Activated CD4-positive, alpha-beta memory T cell treated with anti-CD3 and anti-CD28 coated beads for 36 hours (primary cell): ENCODE measurements at regions of chr6 and their contacts with region 1.

Region 1: GRCh38 chr6:170295510-170296422 is 4.9 kb upstream of the DLL1 start:
- DNase-seq: peak; percentile 66
- H3K4me3 Mint-ChIP-seq: peak overlapping the region; percentile 62
- H3K27ac Mint-ChIP-seq: no peak overlapping the region
- H3K4me1 Mint-ChIP-seq: peaks cover 32% of the 10 kb centered on the region
- H3K27me3 Mint-ChIP-seq: peaks cover 55% of the 10 kb centered on the region

Region 2: DNA sequence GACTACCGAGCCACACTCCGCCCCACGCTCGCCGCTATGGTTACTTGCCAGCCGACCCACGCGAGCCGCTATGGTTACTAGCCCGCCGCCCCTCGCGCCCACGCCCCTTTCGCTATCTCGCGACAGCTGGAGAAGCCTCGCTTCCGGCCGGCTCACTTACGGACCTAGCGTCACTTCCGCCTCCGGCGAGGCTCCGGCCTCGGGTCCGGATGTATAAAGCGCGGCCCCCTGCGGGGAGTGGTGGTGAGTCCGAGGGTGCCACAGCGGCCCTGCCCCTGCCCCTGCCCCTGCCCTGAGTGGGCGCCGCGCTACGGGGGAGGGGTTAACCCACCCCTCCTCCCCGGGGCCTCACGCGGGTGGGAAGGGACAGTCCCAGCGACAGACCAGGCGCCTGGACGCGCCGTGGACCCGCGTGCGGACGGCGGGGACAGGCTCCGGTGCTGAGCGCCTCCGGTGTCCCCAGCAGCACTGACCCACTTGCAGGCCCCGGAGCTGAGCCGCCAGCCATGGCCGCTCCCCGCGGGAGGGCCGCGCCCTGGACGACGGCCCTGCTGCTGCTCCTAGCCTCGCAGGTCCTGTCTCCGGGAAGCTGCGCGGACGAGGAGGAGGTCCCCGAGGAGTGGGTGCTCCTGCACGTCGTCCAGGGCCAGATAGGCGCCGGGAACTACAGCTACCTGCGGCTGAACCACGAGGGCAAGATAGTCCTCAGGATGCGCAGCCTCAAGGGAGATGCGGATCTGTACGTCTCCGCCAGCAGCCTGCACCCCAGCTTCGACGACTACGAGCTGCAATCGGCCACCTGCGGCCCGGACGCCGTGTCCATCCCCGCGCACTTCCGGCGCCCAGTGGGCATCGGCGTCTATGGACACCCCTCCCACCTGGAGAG is 593.6 kb before region 1 on chr6 and contains the starts of genes C6orf120 and WDR27:
- CTCF ChIA-PET with region 1: no interaction called
- POLR2A ChIA-PET with region 1: no interaction called
- intact Hi-C with region 1: loop called (anchors 5 kb)
- DNase-seq: peak; percentile 99
- H3K4me3 Mint-ChIP-seq: peak within 1 kb of the TSS; percentile 89
- H3K27ac Mint-ChIP-seq: peak within 1 kb of the TSS; percentile 88
- H3K4me1 Mint-ChIP-seq: peaks cover 43% of the 10 kb centered on the region
- H3K27me3 Mint-ChIP-seq: no peaks in the 10 kb centered on the region
- total RNA-seq, gene C6orf120: 15.1 to 15.4 TPM
- total RNA-seq, gene WDR27: 39.7 to 41.6 TPM

Region 3: DNA sequence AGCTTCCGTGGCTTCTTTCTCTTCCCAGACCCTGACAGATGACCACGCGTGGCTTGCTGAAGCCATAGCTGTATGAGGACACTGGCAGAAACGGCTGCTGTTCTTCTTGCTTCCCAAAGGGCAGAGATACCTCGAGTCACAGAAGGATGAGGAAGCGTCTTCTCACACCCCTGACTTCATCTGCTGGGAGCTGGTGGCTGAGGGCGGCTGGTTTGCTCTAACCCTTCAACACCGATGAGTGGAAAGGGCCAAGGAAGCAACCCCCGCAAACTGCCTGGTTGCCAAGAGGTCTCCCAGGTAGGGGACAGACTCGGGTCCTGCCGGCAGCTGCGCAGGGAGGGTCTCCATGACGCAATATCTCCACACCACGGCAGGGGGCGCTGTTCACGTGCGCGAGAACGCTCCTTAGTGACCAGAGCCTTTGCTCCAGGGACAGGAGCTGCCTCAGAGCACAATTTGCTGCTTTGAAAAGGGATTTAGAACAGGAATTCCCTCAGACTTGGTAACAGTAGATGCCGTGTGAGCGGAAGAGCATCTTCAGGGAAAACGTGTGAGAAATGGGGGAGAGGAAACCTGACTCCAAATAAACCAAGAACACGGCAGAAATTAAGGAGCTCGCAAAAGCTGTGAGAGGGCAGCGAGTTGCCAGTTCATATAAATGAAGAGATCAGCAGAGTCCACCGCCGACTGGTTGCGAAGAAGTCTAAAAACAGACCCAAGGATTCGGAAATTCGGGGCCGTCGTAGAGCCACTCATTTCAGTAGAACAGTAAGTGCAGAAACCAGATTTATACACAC is 464.1 kb before region 1 on chr6:
- CTCF ChIA-PET with region 1: interaction called, 6 read pairs
- POLR2A ChIA-PET with region 1: no interaction called
- intact Hi-C with region 1: loop called (anchors 10 kb)
- DNase-seq: peak; percentile 80
- H3K4me3 Mint-ChIP-seq: no peak overlapping the region
- H3K27ac Mint-ChIP-seq: no peak overlapping the region
- H3K4me1 Mint-ChIP-seq: peaks cover 4% of the 10 kb centered on the region
- H3K27me3 Mint-ChIP-seq: peaks cover 40% of the 10 kb centered on the region

Region 4: GRCh38 chr6:169990095-169991030 is 305.4 kb before region 1 on chr6:
- CTCF ChIA-PET with region 1: no interaction called
- POLR2A ChIA-PET with region 1: no interaction called
- intact Hi-C with region 1: loop called (anchors 5 kb)
- DNase-seq: peak; percentile 86
- H3K4me3 Mint-ChIP-seq: peak overlapping the region; percentile 52
- H3K27ac Mint-ChIP-seq: peak overlapping the region; percentile 75
- H3K4me1 Mint-ChIP-seq: peaks cover 25% of the 10 kb centered on the region
- H3K27me3 Mint-ChIP-seq: no peaks in the 10 kb centered on the region

Region 5: DNA sequence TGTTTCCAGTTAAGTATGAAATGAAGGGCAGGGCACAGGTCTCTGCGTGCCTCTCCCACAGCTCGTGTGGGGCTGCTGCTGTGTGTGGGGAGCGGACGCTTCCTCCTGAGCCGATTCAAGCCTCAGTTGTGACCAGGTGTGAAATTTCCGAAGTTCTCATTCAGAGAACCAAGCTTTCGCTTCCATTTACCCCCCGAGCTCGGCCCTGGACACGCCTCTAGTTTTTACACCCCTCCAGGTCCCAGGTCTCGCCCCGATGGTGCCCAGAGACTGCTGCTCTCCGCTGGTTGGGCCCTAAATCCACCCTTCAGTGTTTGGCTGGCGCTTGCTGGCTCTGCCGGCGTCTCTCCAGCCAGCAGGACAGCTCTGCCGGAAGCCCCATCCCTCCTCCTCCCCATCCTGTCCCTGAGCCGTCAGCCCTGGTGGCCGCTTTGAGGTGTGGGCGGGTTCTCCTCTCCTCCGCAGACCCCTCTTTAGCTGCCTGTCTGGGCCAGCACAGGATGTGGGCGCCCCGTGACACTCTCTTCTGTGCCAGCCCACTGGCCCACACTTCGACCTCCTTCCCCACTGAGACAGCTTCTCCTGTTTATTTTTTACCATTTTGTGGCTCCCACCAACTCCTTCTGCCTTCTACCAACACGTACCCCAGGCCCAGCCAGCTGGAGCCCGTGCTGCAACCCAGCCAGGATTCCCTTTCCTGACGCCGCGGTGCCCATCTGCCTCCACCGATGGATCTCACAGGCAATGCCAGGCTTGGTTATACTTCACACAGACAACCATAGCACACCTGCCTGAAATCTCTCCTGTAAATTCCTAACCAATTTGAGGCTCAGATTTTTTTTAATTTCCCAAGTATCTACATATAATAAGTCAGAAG is 147.7 kb before region 1 on chr6:
- CTCF ChIA-PET with region 1: no interaction called
- POLR2A ChIA-PET with region 1: no interaction called
- intact Hi-C with region 1: loop called (anchors 5 kb)
- DNase-seq: peak; percentile 71
- H3K4me3 Mint-ChIP-seq: peak overlapping the region; percentile 62
- H3K27ac Mint-ChIP-seq: peak overlapping the region; percentile 85
- H3K4me1 Mint-ChIP-seq: peaks cover 40% of the 10 kb centered on the region
- H3K27me3 Mint-ChIP-seq: peaks cover 14% of the 10 kb centered on the region